A549 (cell line): ENCODE measurements at regions of chr16 and their contacts with region 1.

Region 1: GRCh38 chr16:67260426-67261075 is 11.8 kb downstream of the SLC9A5 start:
- DNase-seq: peak in 1 of 2 experiments; percentile 61
- ATAC-seq: peak; percentile 48 to 75; a peak in 4 of 6 replicates
- H3K4me3 ChIP-seq: no peak overlapping the region
- H3K27ac ChIP-seq: no peak overlapping the region
- H3K4me1 ChIP-seq: no peaks in the 10 kb centered on the region
- CTCF ChIP-seq: peak; percentile 58
- EP300 ChIP-seq: no peak
- POLR2A ChIP-seq: no peak
- RAD21 ChIP-seq: peak; percentile 69 to 77

Region 2: DNA sequence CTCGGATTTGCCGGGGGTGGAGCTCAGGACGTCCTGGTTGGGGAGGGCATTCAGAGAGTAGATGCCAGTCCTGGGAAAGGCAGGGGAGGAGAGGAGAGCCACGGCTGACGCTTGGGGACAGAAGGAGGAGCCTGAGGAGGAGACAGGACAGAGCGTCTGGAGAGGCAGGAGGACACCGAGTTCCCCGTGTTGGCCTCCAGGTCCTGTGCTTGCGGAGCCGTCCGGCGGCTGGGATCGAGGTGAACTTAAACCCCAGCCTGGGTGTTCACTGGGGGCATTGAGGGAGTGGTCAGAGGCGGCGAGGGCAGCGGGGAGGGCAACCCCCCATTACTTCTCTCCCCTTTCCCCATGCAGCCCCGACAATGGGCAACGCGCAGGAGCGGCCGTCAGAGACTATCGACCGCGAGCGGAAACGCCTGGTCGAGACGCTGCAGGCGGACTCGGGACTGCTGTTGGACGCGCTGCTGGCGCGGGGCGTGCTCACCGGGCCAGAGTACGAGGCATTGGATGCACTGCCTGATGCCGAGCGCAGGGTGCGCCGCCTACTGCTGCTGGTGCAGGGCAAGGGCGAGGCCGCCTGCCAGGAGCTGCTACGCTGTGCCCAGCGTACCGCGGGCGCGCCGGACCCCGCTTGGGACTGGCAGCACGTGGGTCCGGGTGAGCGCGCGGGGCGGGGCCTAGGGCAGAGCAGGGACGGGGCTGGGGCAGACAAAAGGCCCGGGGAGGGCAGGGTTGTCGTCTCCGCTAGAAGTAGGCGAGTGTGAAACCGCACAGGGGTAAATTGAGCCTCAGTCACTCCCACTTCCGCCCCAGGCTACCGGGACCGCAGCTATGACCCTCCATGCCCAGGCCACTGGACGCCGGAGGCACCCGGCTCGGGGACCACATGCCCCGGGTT is 86.5 kb before region 1 on chr16:
- CTCF ChIA-PET with region 1: no interaction called
- POLR2A ChIA-PET with region 1: no interaction called
- DNase-seq: peak; percentile 89 to 91
- ATAC-seq: peak; percentile 59 to 82
- H3K4me3 ChIP-seq: peak overlapping the region; percentile 50
- H3K27ac ChIP-seq: peak overlapping the region; percentile 84 to 87
- H3K4me1 ChIP-seq: peaks cover 45% of the 10 kb centered on the region
- CTCF ChIP-seq: peak; percentile 26; the same call in 1 of the 3 replicates
- EP300 ChIP-seq: no peak
- POLR2A ChIP-seq: peak; percentile 62
- RAD21 ChIP-seq: peak in 1 of 2 experiments; percentile 28; a peak in 2 of 5 replicates

Region 3: DNA sequence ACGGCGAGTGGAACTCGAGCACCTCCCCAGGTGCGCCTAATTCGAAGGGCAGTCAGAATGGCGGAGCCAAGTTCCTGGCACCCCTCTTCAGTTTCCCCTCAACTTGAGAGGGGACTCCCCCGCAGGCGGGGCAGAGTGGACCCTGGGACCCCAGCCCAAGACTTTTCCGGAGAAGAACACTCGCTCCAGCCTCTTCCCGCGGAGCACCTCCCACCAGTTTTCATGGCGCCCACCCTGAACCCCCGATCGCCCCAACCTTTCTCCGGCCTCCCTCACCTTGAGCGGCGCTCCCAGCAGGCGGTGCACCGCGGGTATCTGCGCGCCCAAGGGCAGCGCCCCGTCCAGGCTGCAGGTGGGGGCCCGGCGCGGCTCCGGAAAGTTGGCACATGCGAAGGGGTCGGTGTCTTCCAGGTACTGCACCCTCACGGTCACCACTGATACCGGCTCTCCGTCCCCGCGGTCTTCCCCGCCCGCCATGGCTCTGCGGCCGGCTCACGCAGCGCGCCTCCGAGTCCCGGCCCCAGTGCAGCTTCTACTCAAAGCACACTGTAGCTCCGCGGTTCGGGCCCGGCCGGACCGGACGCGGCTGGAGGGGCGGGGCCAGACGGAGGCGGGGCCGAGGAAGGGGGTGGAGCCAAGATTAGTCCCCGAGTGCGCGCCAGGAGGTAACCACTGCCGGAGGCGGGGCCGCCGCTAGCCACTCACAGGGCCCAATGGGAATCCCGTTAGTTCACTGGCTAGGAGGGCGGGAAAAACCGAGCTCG is 13.4 kb before region 1 on chr16 and contains the start of gene FHOD1:
- CTCF ChIA-PET with region 1: interaction called, 34 read pairs
- POLR2A ChIA-PET with region 1: interaction called, 5 read pairs
- DNase-seq: peak; percentile 82 to 95
- ATAC-seq: peak; percentile 38 to 79
- H3K4me3 ChIP-seq: peak within 1 kb of the TSS; percentile 74
- H3K27ac ChIP-seq: peak within 1 kb of the TSS; percentile 91 to 98
- H3K4me1 ChIP-seq: peaks cover 52% of the 10 kb centered on the region
- CTCF ChIP-seq: no peak
- EP300 ChIP-seq: no peak
- POLR2A ChIP-seq: peak; percentile 59
- RAD21 ChIP-seq: no peak
- polyA plus RNA-seq, gene FHOD1: 16.1 and 18.1 TPM in 2 replicates

Region 4: GRCh38 chr16:67279296-67280089 is 18.9 kb after region 1 on chr16 and contains the start of gene PLEKHG4:
- CTCF ChIA-PET with region 1: interaction called, 36 read pairs
- POLR2A ChIA-PET with region 1: interaction called, 13 read pairs
- DNase-seq: peak; percentile 86 to 93
- ATAC-seq: peak; percentile 86 to 91
- H3K4me3 ChIP-seq: peak within 1 kb of the TSS; percentile 80
- H3K27ac ChIP-seq: peak within 1 kb of the TSS; percentile 96 to 98
- H3K4me1 ChIP-seq: peaks cover 35% of the 10 kb centered on the region
- CTCF ChIP-seq: peak; percentile 78
- EP300 ChIP-seq: no peak
- POLR2A ChIP-seq: peak; percentile 65
- RAD21 ChIP-seq: peak; percentile 33 to 60; a peak in 4 of 5 replicates
- polyA plus RNA-seq, gene PLEKHG4: 10.0 and 17.7 TPM in 2 replicates

Region 5: DNA sequence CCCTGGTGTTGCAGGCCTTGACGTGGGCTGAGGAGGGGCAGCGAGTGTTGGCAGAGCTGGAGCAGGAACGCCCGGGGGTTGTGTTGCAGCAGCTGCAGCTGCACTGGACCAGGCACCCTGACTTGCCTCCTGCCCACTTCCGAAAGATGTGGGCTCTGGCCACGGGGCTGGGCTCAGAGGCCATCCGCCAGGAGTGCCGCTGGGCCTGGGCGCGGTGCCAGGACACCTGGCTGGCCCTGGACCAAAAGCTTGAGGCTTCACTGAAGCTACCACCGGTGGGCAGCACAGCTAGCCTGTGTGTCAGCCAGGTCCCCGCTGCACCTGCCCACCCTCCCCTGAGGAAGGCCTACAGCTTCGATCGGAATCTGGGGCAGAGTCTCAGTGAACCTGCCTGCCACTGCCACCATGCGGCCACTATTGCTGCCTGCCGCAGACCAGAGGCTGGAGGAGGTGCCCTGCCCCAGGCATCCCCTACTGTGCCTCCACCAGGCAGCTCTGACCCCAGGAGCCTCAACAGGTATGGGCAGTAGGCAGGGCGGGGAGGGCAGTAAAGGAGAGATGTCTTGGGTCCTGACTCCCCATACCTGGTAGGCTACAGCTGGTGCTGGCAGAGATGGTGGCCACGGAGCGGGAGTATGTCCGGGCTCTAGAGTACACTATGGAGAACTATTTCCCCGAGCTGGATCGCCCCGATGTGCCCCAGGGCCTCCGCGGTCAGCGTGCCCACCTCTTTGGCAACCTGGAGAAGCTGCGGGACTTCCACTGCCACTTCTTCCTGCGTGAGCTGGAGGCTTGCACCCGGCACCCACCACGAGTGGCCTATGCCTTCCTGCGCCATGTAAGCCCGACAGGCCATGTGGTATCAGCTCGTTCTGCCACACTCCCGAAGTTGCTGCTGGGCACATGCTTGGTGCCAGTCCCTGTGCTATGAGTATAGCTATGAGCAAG is 24.4 kb after region 1 on chr16:
- CTCF ChIA-PET with region 1: interaction called, 36 read pairs
- POLR2A ChIA-PET with region 1: no interaction called
- DNase-seq: peak; percentile 44 to 61
- ATAC-seq: peak; percentile 63 to 88; a peak in 5 of 6 replicates
- H3K4me3 ChIP-seq: no peak overlapping the region
- H3K27ac ChIP-seq: no peak overlapping the region
- H3K4me1 ChIP-seq: peaks cover 14% of the 10 kb centered on the region; the same call in 2 of the 3 replicates
- CTCF ChIP-seq: peak; percentile 48
- EP300 ChIP-seq: no peak
- POLR2A ChIP-seq: no peak
- RAD21 ChIP-seq: peak; percentile 39 to 57

Region 6: DNA sequence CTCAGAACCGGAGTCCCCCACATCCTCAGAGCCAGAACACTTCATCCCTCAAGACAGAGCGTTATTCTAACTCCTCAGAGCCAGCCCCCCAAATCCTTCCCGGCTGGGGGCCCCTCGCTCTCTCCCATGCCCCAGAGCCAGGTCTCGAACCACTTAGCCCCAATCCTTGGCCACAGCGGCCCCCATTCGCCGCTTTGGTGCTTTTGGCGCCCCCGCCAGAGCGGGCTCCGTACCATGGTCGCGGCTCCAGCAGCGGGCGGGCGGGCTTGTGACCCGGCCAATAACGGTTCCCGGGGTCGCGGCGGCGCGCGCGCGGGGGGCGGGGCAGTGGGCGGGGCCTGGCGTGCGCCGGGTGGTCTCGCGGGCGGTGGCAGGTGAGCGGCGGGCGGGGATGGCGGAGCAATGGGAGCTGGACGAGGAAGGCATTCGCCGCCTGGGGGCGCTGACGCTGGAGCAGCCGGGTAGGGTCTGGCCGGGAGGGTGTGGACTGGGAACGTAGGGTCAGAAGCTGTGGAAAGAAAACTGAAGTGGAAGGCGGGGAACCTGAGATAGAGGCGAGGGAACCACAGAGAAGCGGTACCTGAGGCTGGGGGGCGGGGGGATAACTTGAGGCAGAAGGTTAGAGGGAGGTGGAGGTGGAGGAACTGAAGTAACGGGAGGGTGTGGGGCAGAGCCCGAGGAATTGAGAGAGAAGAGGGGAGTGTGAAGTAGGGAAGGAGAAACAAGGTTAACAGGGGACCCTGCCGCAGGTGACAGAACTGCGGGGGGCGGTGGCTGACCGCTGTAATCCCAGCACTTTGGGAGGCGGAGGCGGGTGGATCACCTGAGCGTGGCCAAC is 66.1 kb after region 1 on chr16 and contains the starts of genes KCTD19 and LRRC36:
- CTCF ChIA-PET with region 1: interaction called, 17 read pairs
- POLR2A ChIA-PET with region 1: no interaction called
- DNase-seq: peak; percentile 80 to 93
- ATAC-seq: peak; percentile 99
- H3K4me3 ChIP-seq: peak within 1 kb of the TSS; percentile 60
- H3K27ac ChIP-seq: peak within 1 kb of the TSS; percentile 70 to 82
- H3K4me1 ChIP-seq: peaks cover 15% of the 10 kb centered on the region
- CTCF ChIP-seq: peak; percentile 62
- EP300 ChIP-seq: no peak
- POLR2A ChIP-seq: no peak
- RAD21 ChIP-seq: peak; percentile 39 to 61
- polyA plus RNA-seq, gene KCTD19: 1.1 and 2.4 TPM in 2 replicates
- polyA plus RNA-seq, gene LRRC36: 0.57 and 0.93 TPM in 2 replicates

Region 7: DNA sequence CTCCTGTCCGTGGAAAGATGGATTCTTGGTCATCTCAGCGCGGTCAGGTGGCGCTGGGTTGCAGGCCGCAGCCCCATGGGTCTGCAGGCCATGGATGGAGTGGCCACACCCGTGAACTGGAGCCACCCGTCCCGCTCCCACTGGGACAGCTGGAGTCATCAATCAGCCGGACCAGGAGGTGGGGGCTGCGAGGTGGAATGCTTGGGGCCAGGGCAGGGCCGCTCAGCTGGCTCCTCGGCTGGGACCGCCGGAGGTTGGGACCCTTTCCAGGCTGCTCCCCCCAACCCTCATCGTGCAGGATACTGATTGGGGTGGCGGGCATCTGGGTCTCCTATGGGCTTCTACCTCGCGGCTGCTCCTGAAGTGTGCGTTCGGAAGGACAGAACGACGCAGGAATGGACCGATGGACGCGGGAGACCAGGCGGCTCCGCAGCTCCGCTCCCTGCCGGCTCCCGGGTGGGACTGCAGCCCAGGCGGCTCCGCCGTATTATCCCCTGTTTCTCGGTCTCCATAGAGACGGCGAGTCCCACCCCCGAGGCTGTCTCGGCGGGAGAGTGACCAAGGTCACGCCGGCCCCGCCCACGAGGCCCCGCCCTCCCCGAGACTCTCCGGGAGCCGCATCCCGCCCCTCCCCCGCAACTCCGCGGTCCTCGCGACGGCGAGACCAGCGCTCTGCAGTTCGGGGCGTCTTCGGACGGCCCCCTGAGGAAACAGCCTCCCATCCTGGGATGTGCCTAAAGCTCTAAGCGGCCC is 132.7 kb after region 1 on chr16 and contains the start of gene TPPP3:
- CTCF ChIA-PET with region 1: interaction called, 10 read pairs
- POLR2A ChIA-PET with region 1: no interaction called
- DNase-seq: peak; percentile 73
- ATAC-seq: peak; percentile 56 to 80
- H3K4me3 ChIP-seq: peak within 1 kb of the TSS; percentile 41
- H3K27ac ChIP-seq: peak within 1 kb of the TSS; percentile 46 to 75; a peak in 5 of 6 replicates
- H3K4me1 ChIP-seq: peaks cover 15% of the 10 kb centered on the region
- CTCF ChIP-seq: peak; percentile 15; the same call in 1 of the 3 replicates
- EP300 ChIP-seq: no peak
- POLR2A ChIP-seq: 0 out of 2 replicates have a peak, but pooled peaks have one; percentile 6
- RAD21 ChIP-seq: peak in 1 of 2 experiments; percentile 34; a peak in 1 of 5 replicates
- polyA plus RNA-seq, gene TPPP3: 9.4 and 10.6 TPM in 2 replicates

Region 8: GRCh38 chr16:67415872-67416793 is 155.6 kb after region 1 on chr16 and contains the start of gene ZDHHC1:
- CTCF ChIA-PET with region 1: interaction called, 11 read pairs
- POLR2A ChIA-PET with region 1: no interaction called
- DNase-seq: peak; percentile 78 to 89
- ATAC-seq: peak; percentile 94 to 96
- H3K4me3 ChIP-seq: peak within 1 kb of the TSS; percentile 80
- H3K27ac ChIP-seq: peak within 1 kb of the TSS; percentile 91 to 96
- H3K4me1 ChIP-seq: peaks cover 9% of the 10 kb centered on the region; the same call in 2 of the 3 replicates
- CTCF ChIP-seq: peak; percentile 70
- EP300 ChIP-seq: no peak
- POLR2A ChIP-seq: peak; percentile 49; the same call in 1 of the 2 replicates
- RAD21 ChIP-seq: peak; percentile 49 to 69
- polyA plus RNA-seq, gene ZDHHC1: 3.5 and 3.8 TPM in 2 replicates